Transverse colon (tissue), 4 donors: ENCODE measurements at regions of chr3 and their contacts with region 1.

Region 1: GRCh38 chr3:8490079-8490552 is 11.5 kb upstream of the LMCD1 start:
- DNase-seq: no peak
- H3K4me3 ChIP-seq: no peak overlapping the region
- H3K27ac ChIP-seq: peak overlapping the region in 2 of 4 donors; percentile 23 to 38
- H3K4me1 ChIP-seq: peaks cover 0 to 6% (median 1%) of the 10 kb centered on the region in 4 donors
- H3K27me3 ChIP-seq: no peaks in the 10 kb centered on the region
- CTCF ChIP-seq: no peak
- EP300 ChIP-seq: no peak
- POLR2A ChIP-seq: no peak

Region 2: DNA sequence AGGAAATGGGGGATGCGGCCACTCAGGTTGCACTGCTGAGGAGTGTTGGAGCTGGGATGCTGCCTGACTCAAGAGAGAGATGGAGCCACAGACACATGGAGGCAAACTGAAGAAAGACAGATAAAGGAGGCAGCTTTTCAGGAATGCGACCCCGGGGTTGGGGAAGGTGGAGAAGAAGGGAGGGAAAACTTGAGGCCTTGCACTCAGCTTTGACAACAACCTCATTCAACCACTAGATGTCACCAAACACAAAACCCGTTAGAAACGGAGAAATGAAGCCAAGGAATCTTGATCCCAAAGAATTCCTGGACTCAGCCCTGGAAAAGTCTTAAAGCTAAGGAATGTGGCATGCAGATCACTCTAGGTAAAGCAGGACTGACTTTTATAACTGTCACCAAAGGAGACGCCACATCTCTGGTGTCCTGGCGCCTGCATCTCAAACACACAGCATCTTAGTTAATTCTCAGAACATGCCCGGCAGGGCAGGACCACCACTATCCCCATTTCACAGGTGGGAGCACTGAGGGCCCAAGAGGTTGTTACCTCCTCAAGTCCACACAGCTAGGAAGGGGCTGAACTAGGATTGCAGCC is 48.1 kb before region 1 on chr3:
- in situ Hi-C with region 1: no loop called
- intact Hi-C with region 1: loop called (anchors 10 kb)
- DNase-seq: no peak
- H3K4me3 ChIP-seq: no peak overlapping the region
- H3K27ac ChIP-seq: peak overlapping the region in 2 of 4 donors; percentile 0 to 84
- H3K4me1 ChIP-seq: peaks cover 0 to 34% (median 21%) of the 10 kb centered on the region in 4 donors
- H3K27me3 ChIP-seq: no peaks in the 10 kb centered on the region
- CTCF ChIP-seq: peak; percentile 62 to 79 (median 71)
- EP300 ChIP-seq: no peak
- POLR2A ChIP-seq: no peak